ENCODE measurements at regions of chr3 and their contacts with region 1.

Region 1: DNA sequence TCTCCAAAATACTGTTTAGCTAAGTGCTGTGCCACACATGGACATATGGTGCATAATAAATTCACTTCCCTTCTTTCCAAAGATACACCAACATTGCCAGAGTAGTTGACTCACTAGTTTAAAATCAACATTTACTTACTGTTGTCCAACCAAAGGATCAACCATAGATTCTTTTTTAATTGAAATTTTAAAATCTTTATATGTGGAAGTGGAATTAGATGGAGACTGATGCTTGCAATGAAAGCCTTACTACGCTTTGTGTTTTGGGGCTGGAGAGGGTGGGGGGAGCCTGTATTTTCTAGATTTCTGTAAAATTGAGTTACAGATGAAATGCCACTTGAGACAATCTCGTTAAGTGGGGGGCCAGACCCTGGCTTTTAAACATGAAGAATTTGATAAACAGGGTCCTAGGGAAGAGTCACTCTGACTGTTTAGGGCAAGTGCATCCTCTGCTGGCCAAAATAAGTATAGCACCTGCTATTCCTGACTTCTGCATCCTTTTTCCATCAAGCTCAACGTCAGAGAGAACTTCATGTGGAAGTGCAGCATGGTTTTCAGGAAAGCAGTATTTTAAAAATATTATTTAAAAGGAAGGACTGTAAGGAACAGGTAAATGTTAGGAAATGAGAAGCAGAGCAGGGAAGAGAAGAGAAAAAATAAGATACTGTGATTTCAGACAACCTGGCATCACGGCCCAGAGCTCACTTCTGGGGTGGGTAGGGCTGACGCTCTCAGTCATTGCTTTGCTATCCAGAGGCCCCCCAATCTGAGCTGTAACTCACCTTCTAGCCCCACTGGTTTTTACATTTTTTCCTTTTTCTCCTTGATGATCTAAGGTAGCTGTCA is 76.7 kb downstream of the BOC start:
- DNase-seq: no peak
- H3K4me3 ChIP-seq: no peak overlapping the region
- H3K27ac ChIP-seq: no peak overlapping the region
- H3K4me1 ChIP-seq: no peaks in the 10 kb centered on the region
- H3K27me3 ChIP-seq: no peaks in the 10 kb centered on the region
- CTCF ChIP-seq: peak; percentile 99

Region 2: DNA sequence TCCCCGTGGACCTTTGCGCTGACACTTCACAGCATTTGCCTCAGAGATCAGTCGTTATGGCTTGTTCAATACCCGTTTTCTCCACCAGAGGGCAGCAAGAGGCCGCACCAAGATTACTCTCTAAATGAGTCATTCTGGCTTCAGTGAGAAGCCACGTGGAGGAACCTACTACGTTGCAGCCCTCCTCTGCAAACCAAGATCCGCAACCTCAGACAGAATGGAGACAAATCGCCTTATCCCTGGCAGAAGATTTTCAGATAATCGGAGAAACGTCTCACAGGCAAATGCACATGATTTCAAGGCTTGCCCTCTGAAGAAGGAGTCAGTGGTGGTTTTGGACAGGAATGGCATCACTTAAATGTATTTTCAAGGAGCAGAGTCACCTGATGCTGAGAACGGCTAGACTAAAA is 236.7 kb before region 1 on chr3:
- intact Hi-C with region 1: loop called (anchors 2 kb)
- DNase-seq: peak; percentile 70
- H3K4me3 ChIP-seq: no peak overlapping the region
- H3K27ac ChIP-seq: no peak overlapping the region
- H3K4me1 ChIP-seq: peaks cover 6% of the 10 kb centered on the region
- H3K27me3 ChIP-seq: no peaks in the 10 kb centered on the region
- CTCF ChIP-seq: peak; percentile 97

Region 3: DNA sequence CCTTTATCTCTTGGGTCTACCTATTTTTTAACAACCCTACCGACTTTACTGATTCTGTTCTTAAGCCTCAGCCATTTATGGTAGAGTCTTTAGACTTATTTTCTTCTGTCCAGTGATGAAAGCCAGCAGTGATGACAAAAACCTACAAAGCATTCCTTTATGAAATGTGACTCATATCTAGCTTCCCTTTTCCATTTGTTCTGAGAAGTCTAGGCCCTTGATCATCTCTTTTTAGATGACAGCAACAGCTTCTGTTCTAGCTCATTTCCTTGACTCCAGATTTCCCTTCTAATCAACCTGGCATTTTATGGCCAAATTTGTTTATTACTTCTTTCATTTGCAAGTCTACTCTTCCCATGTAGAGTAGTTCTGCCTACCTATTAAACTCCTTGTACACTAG is 117.2 kb after region 1 on chr3:
- intact Hi-C with region 1: no loop called
- DNase-seq: no peak
- H3K4me3 ChIP-seq: no peak overlapping the region
- H3K27ac ChIP-seq: no peak overlapping the region
- H3K4me1 ChIP-seq: no peaks in the 10 kb centered on the region
- H3K27me3 ChIP-seq: no peaks in the 10 kb centered on the region
- CTCF ChIP-seq: no peak

Region 4: GRCh38 chr3:113423699-113424098 is 135.7 kb after region 1 on chr3:
- intact Hi-C with region 1: no loop called
- DNase-seq: no peak
- H3K4me3 ChIP-seq: no peak overlapping the region
- H3K27ac ChIP-seq: no peak overlapping the region
- H3K4me1 ChIP-seq: no peaks in the 10 kb centered on the region
- H3K27me3 ChIP-seq: no peaks in the 10 kb centered on the region
- CTCF ChIP-seq: no peak

Region 5: DNA sequence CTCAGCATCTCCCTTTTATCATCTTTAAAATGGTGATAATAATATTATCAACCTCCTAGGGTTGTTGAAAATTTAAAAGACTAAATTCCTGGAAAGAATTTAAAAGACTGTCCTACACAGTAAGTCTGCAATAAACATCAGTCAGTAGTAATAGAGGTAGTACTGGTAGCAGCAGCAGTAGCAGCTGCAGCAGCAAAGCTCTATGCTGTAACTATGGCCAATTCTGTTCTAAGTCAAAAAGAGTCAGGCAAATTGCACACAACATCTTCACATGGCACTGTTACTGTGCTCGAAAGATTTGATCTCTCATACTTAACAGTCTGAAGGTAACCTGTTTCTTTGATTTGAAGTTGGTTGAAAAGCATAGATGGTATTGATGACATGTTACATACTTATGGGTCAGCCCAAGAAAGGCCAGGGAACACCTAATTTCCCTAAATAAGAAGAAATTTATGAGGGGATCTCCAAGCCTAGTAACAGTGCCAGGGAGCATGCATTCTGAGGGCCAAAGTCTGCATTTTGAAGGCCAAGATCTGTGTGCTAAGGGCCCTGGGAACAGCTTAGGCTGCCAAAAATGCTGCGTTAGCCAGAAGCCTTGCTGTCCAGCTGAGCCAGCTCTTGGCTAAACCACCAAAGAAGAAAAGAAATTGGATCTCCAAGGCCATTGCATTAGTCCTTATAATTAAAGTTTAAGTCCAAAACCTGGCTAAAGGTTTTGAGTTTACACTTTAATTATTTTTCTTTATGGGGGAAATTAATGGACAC is 312.6 kb after region 1 on chr3:
- intact Hi-C with region 1: no loop called
- DNase-seq: peak; percentile 23
- H3K4me3 ChIP-seq: no peak overlapping the region
- H3K27ac ChIP-seq: no peak overlapping the region
- H3K4me1 ChIP-seq: no peaks in the 10 kb centered on the region
- H3K27me3 ChIP-seq: no peaks in the 10 kb centered on the region
- CTCF ChIP-seq: no peak

Measured in left ventricle myocardium inferior (tissue), 1 donor.